ENCODE measurements at regions of chr6 and their contacts with region 1.

Region 1: GRCh38 chr6:139605350-139605749 is 230.9 kb upstream of the CITED2 start:
- DNase-seq: peak in 1 of 2 donors; percentile 71
- H3K4me3 ChIP-seq: no peak overlapping the region
- H3K27ac ChIP-seq: no peak overlapping the region
- H3K4me1 ChIP-seq: peaks cover 0 to 4% of the 10 kb centered on the region in 2 donors
- H3K27me3 ChIP-seq: no peaks in the 10 kb centered on the region
- CTCF ChIP-seq: no peak

Region 2: DNA sequence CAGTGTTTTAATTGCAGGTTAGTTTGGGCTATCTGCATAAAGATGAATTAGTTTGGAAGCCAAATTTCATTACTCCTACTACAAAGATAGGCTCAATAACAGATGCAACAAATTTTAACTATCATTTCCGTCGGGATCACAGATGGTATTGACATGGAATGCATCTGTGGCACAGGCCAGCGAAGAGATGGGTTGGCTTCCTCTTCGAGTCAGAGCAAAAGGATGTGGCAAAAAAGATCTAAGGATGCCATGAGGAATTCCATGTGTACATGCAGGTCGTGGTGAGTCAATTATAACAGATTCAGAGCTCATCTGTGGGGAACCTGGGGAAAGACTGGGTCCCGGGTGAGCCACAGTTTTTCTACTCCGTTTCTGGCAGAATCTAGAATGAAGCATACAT is 147.9 kb before region 1 on chr6:
- intact Hi-C with region 1: no loop called
- DNase-seq: no peak
- H3K4me3 ChIP-seq: no peak overlapping the region
- H3K27ac ChIP-seq: no peak overlapping the region
- H3K4me1 ChIP-seq: no peaks in the 10 kb centered on the region
- H3K27me3 ChIP-seq: no peaks in the 10 kb centered on the region
- CTCF ChIP-seq: no peak

Region 3: DNA sequence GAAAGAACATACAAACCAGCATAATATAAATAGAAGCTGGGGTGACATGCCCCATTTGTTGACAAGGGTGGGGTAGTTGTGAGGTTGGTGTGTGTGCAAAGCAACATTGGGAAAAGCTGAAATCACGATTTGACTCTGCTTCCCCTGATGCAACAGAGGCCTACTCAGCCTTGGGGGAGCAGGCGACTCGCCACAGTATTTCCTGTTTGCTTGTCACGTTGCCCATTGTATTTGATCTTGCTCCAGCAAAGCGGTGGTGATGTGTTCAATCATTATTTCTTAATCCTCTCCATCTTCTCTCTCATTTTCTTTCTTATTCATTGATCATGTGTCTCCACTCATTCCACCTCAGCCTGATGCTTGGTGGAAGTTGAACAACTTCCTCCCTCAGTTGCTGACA is 65.1 kb before region 1 on chr6:
- intact Hi-C with region 1: loop called (anchors 5 kb)
- DNase-seq: peak in 1 of 2 donors; percentile 69
- H3K4me3 ChIP-seq: no peak overlapping the region
- H3K27ac ChIP-seq: peak overlapping the region; percentile 68 to 69
- H3K4me1 ChIP-seq: peaks cover 0 to 14% of the 10 kb centered on the region in 2 donors
- H3K27me3 ChIP-seq: no peaks in the 10 kb centered on the region
- CTCF ChIP-seq: no peak